Psoas muscle (tissue), 8 donors: ENCODE measurements at regions of chr9 and their contacts with region 1.

Region 1: DNA sequence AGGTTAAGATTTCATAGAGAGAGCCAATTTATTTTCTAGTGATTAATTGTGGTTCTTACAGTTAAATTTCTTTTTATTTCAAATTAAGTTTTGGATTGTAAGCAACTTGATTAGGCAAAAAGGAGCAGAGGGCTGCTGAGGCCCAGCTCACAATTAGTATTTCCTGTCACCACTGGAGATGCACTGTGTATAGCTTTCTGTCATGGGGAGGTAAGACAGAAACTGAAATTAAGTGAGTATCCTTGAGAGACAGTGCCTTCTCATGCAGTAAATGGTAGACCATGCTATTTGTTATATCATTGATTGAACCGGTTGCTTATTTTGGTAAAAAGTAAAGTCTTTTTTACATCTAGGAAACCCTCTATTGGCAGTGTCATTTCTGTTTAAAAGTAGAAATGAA is 190.7 kb downstream of the CCDC171 start:
- DNase-seq: no peak
- ATAC-seq: no peak
- H3K4me3 ChIP-seq: no peak overlapping the region
- H3K27ac ChIP-seq: no peak overlapping the region
- H3K4me1 ChIP-seq: no peaks in the 10 kb centered on the region
- H3K27me3 ChIP-seq: no peaks in the 10 kb centered on the region
- CTCF ChIP-seq: no peak

Region 2: GRCh38 chr9:15670884-15671283 is 72.6 kb before region 1 on chr9:
- intact Hi-C with region 1: no loop called
- DNase-seq: no peak
- ATAC-seq: no peak
- H3K4me3 ChIP-seq: no peak overlapping the region
- H3K27ac ChIP-seq: no peak overlapping the region
- H3K4me1 ChIP-seq: no peaks in the 10 kb centered on the region
- H3K27me3 ChIP-seq: no peaks in the 10 kb centered on the region
- CTCF ChIP-seq: no peak

Region 3: GRCh38 chr9:15693701-15694100 is 49.8 kb before region 1 on chr9:
- intact Hi-C with region 1: loop called in 1 of 2 experiments (anchors 10 kb)
- DNase-seq: no peak
- ATAC-seq: no peak
- H3K4me3 ChIP-seq: no peak overlapping the region
- H3K27ac ChIP-seq: no peak overlapping the region
- H3K4me1 ChIP-seq: no peaks in the 10 kb centered on the region
- H3K27me3 ChIP-seq: no peaks in the 10 kb centered on the region
- CTCF ChIP-seq: no peak